Activated CD4-positive, alpha-beta memory T cell treated with anti-CD3 and anti-CD28 coated beads for 36 hours (primary cell): ENCODE measurements at regions of chr7 and their contacts with region 1.

Region 1: DNA sequence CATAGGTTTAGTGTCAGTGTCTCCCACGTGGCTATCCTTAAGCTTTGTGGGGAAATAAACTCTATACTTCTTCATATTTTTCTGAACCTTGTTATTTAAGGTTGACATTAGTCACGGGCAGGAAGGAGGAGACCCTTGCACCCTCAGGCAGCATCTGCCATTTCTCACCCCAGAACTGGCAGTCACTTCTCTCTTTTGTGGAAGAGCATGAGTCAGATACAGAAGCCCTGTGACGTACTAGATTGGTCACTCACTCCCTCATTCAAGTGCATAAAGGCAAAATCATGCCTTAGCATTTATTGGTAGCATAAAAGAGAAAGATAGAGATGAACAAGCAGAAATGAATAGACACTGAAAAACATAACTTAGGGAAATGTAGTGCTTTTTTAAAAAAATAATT is 206.0 kb upstream of the MDFIC start:
- DNase-seq: peak; percentile 35
- H3K4me3 Mint-ChIP-seq: no peak overlapping the region
- H3K27ac Mint-ChIP-seq: no peak overlapping the region
- H3K4me1 Mint-ChIP-seq: peaks cover 12% of the 10 kb centered on the region
- H3K27me3 Mint-ChIP-seq: peaks cover 12% of the 10 kb centered on the region

Region 2: GRCh38 chr7:114784746-114785145 is 68.8 kb after region 1 on chr7:
- CTCF ChIA-PET with region 1: no interaction called
- POLR2A ChIA-PET with region 1: no interaction called
- intact Hi-C with region 1: loop called (anchors 1 kb)
- DNase-seq: no peak
- H3K4me3 Mint-ChIP-seq: no peak overlapping the region
- H3K27ac Mint-ChIP-seq: peak overlapping the region; percentile 56
- H3K4me1 Mint-ChIP-seq: peaks cover 41% of the 10 kb centered on the region
- H3K27me3 Mint-ChIP-seq: peaks cover 3% of the 10 kb centered on the region

Region 3: GRCh38 chr7:114813624-114814023 is 97.7 kb after region 1 on chr7:
- CTCF ChIA-PET with region 1: no interaction called
- POLR2A ChIA-PET with region 1: no interaction called
- intact Hi-C with region 1: no loop called
- DNase-seq: no peak
- H3K4me3 Mint-ChIP-seq: no peak overlapping the region
- H3K27ac Mint-ChIP-seq: no peak overlapping the region
- H3K4me1 Mint-ChIP-seq: peaks cover 28% of the 10 kb centered on the region
- H3K27me3 Mint-ChIP-seq: no peaks in the 10 kb centered on the region

Region 4: GRCh38 chr7:114916261-114916892 is 200.5 kb after region 1 on chr7:
- CTCF ChIA-PET with region 1: no interaction called
- POLR2A ChIA-PET with region 1: no interaction called
- intact Hi-C with region 1: loop called (anchors 5 kb)
- DNase-seq: peak; percentile 69
- H3K4me3 Mint-ChIP-seq: peak overlapping the region; percentile 38
- H3K27ac Mint-ChIP-seq: peak overlapping the region; percentile 90
- H3K4me1 Mint-ChIP-seq: peaks cover 57% of the 10 kb centered on the region
- H3K27me3 Mint-ChIP-seq: no peaks in the 10 kb centered on the region

Region 5: DNA sequence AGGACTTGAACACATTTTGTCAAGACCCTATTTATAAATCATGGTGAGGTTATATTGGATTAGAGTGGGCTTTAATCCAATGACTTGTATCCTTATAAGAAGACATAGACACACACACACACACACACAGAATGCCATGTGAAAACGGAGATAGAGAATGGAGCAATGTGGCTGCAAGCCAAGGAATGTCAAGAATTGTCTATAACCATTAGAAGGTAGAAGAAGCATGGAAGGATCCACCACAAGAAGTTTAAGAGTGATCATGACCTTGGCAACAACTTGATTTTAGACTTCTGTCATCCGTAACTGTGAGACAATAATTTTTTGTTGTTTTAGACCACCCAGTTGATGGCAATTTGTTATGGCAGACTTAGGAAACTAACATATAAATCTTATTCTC is 800.4 kb after region 1 on chr7:
- CTCF ChIA-PET with region 1: no interaction called
- POLR2A ChIA-PET with region 1: no interaction called
- intact Hi-C with region 1: no loop called
- DNase-seq: no peak
- H3K4me3 Mint-ChIP-seq: no peak overlapping the region
- H3K27ac Mint-ChIP-seq: no peak overlapping the region
- H3K4me1 Mint-ChIP-seq: no peaks in the 10 kb centered on the region
- H3K27me3 Mint-ChIP-seq: no peaks in the 10 kb centered on the region